ENCODE measurements at regions of chr3 and their contacts with region 1.

Region 1: GRCh38 chr3:15241341-15241740 is 35.3 kb downstream of the CAPN7 start:
- DNase-seq: peak in 1 of 2 experiments; percentile 35
- H3K4me3 ChIP-seq: no peak overlapping the region
- H3K27ac ChIP-seq: no peak overlapping the region
- H3K4me1 ChIP-seq: no peaks in the 10 kb centered on the region
- H3K27me3 ChIP-seq: no peaks in the 10 kb centered on the region
- CTCF ChIP-seq: peak; percentile 63

Region 2: DNA sequence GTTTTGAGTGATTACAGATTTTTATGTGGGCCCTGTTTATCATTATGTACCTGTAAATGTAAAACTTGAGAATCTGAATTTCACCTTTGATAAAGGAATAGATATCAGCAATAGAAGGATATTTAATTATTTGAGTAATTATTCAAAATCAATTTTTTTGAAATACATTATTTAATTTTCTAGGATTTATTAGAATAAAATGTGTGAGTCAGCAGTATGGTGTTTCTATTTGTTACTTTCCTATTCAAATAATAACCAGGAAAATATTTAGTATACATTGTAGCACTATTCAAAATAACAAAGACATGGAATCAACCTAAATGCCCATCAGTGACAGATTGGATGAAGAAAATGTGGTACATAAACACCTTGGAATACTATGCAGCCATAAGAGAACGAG is 13.2 kb before region 1 on chr3:
- CTCF ChIA-PET with region 1: no interaction called
- POLR2A ChIA-PET with region 1: no interaction called
- intact Hi-C with region 1: no loop called
- DNase-seq: no peak
- H3K4me3 ChIP-seq: no peak overlapping the region
- H3K27ac ChIP-seq: no peak overlapping the region
- H3K4me1 ChIP-seq: no peaks in the 10 kb centered on the region
- H3K27me3 ChIP-seq: no peaks in the 10 kb centered on the region
- CTCF ChIP-seq: no peak

Region 3: DNA sequence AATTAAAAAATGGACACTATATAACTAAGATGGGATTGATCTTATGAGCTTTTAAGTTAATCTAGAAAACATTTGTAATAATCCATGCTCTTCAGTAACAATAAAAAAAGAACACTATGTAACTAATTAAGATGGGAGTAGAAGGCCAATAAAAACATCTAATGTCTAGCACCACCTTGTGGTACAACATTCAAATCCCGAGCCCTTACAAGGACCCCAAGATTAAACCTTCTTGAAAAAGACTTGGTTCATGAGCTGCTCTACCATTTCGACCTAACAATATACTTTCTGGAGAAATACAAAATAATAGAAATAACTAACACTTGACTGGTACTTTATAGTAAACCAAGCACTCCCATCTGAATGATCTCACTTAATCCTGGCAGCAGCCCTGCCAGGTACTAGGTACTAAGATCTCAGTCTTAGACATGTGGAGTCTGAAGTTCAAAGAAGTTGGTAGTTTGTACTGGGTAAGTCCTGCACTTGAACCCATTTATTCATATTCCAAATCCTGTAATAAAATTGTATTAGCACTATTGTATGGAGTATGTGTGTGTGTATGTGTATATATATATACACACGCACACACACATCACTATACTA is 164.2 kb after region 1 on chr3:
- CTCF ChIA-PET with region 1: interaction called, 9 read pairs
- POLR2A ChIA-PET with region 1: no interaction called
- intact Hi-C with region 1: loop called (anchors 1 kb)
- DNase-seq: no peak
- H3K4me3 ChIP-seq: no peak overlapping the region
- H3K27ac ChIP-seq: no peak overlapping the region
- H3K4me1 ChIP-seq: peaks cover 8% of the 10 kb centered on the region; the same call in 1 of the 2 replicates
- H3K27me3 ChIP-seq: no peaks in the 10 kb centered on the region
- CTCF ChIP-seq: peak; percentile 84

Region 4: DNA sequence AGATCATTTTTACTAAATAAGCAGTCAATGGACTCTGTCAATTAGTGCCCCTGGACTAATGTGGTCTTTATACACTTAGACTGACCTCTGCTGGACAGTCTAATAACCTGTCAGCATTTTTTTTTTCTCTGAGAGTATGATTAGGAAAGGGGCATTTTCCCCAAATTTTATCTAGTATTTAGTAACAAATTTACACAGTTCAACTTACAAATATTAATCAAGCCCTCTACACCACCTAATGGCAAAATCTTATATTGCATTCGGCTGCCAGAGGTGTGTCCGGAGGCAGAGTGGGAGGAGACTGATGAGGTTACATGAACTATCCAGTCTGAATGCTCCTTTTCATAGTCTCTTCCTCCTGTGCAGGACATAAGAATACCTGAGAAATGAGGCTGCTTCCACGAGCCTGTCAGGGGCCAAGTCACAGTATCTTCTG is 316.2 kb after region 1 on chr3:
- CTCF ChIA-PET with region 1: no interaction called
- POLR2A ChIA-PET with region 1: no interaction called
- intact Hi-C with region 1: loop called (anchors 5 kb)
- DNase-seq: peak; percentile 70 to 77
- H3K4me3 ChIP-seq: no peak overlapping the region
- H3K27ac ChIP-seq: no peak overlapping the region
- H3K4me1 ChIP-seq: 0 out of 2 replicates have a peak, but pooled peaks cover 3% of the 10 kb centered on the region
- H3K27me3 ChIP-seq: no peaks in the 10 kb centered on the region
- CTCF ChIP-seq: peak; percentile 85

Measured in PC-9 (cell line).